ENCODE measurements at regions of chr16 and their contacts with region 1.

Region 1: GRCh38 chr16:20383106-20384029 is 21.2 kb downstream of the PDILT start:
- DNase-seq: peak; percentile 70 to 74
- ATAC-seq: peak; percentile 88 to 98
- H3K4me3 ChIP-seq: no peak overlapping the region
- H3K27ac ChIP-seq: no peak overlapping the region
- H3K4me1 ChIP-seq: no peaks in the 10 kb centered on the region
- CTCF ChIP-seq: peak; percentile 66
- EP300 ChIP-seq: no peak
- POLR2A ChIP-seq: no peak
- RAD21 ChIP-seq: peak; percentile 77 to 84

Region 2: GRCh38 chr16:19926449-19927390 is 456.6 kb before region 1 on chr16:
- CTCF ChIA-PET with region 1: interaction called, 10 read pairs
- POLR2A ChIA-PET with region 1: no interaction called
- DNase-seq: peak in 1 of 2 experiments; percentile 65
- ATAC-seq: peak in 1 of 2 experiments; percentile 42; a peak in 1 of 6 replicates
- H3K4me3 ChIP-seq: no peak overlapping the region
- H3K27ac ChIP-seq: peak overlapping the region; percentile 30 to 71; a peak in 5 of 6 replicates
- H3K4me1 ChIP-seq: peaks cover 9% of the 10 kb centered on the region
- CTCF ChIP-seq: no peak
- EP300 ChIP-seq: no peak
- POLR2A ChIP-seq: no peak
- RAD21 ChIP-seq: no peak

Region 3: DNA sequence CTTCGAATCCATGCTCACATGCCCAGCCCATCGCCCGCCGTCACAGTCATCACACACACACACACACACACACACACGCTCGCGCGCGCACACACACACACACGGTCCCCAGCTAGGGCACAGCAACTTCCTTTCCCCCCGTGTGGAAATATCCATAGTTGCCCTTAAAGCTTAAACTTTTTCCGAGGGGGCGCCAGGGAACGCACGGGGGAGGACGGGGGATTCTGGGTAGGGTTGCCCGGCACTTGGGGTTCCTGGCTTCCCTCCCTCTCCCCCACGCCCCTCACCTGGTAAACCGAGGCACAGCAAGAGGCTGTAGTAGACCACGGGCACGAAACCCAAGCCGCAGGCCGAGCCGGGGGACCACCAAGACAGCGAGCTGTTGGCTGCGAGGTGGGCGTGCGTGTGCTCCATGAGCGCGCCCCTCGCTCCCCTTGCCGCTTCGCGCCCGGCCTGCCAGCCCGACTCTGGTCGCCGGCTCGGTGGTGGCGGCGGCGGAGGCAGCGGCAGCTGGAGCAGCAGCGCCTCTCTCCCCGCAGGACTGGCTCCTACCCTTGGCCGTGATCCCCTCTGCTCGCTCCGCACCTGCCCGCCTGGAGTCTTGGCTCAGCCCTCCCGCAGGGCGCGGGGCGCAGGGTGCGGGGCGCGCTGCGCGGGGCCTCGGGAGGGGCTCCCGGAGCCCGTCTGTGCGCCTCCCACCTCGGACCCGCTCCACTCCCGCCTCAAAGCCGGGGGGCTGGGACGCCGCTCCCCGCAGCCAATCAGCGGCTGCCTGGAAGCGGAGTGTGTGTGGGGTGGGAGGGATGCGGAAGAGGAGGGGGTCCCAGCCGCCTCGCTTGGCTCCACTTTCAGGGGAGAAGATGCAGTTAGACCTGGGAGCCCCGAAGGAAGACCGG is 309.9 kb before region 1 on chr16 and contains the start of gene GPR139:
- CTCF ChIA-PET with region 1: no interaction called
- POLR2A ChIA-PET with region 1: no interaction called
- DNase-seq: no peak
- ATAC-seq: peak in 1 of 2 experiments; percentile 30; a peak in 1 of 6 replicates
- H3K4me3 ChIP-seq: no peak within 1 kb of the TSS
- H3K27ac ChIP-seq: no peak within 1 kb of the TSS
- H3K4me1 ChIP-seq: no peaks in the 10 kb centered on the region
- CTCF ChIP-seq: no peak
- EP300 ChIP-seq: no peak
- POLR2A ChIP-seq: no peak
- RAD21 ChIP-seq: no peak
- polyA plus RNA-seq, gene GPR139: not detected in 2 replicates

Region 4: DNA sequence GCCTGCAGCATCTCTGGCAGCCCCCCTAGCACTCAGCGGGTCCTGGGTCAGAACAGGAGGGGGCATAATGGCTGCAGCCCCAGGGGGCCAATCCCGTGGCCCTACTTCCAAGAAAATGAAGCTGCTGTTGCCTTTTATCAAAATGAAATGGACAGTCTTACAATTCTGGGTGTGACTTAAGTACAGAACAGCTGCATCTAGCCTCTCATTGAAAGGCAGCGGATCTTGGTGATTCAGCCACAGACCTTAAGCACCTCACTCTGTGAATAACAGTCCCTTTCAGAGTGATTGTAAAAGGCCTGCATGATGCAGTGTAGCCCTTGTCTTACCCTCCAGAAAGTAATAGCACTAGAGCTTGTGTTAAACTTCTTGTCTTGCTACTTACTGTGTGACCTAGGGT is 19.3 kb before region 1 on chr16:
- CTCF ChIA-PET with region 1: interaction called, 11 read pairs
- POLR2A ChIA-PET with region 1: no interaction called
- DNase-seq: no peak
- ATAC-seq: no peak
- H3K4me3 ChIP-seq: no peak overlapping the region
- H3K27ac ChIP-seq: no peak overlapping the region
- H3K4me1 ChIP-seq: no peaks in the 10 kb centered on the region
- CTCF ChIP-seq: no peak
- EP300 ChIP-seq: no peak
- POLR2A ChIP-seq: no peak
- RAD21 ChIP-seq: no peak

Region 5: DNA sequence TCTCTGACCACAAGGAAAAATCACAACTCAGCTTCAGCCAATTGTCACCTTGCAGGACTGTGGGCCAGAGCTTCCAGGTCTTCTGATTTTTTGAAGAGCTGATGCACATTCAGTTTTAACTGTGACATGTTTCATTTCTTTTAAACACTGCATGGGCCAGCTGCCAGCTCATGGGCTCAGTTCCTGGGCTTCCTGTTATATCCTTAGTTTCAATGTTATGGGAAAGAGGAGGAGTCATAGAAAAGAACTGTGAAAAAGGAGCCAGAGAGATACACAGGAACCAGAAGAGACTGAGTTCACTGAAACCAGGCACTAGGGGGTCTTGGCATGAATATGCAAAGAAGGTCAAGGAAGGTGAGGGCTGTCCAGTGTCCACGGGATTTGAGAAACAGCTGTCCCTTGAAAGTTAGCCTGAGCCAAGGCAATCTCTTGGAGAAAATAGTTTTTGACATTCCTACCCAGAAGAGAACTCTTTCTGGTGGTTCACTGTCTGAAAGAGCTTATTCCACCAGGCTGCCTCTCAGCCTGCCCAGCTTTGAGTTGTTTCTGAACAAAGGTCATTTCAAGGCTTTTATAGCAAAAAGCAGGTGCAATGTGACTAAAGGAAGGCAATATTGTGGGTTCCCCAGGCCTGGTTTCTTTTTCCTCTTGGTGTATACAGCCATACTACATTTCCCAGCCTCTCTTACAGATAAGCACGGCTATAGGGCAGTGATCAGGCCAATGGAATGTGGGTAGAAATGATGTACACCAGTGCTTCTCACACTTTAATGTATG is 10.6 kb after region 1 on chr16:
- CTCF ChIA-PET with region 1: interaction called, 31 read pairs
- POLR2A ChIA-PET with region 1: no interaction called
- DNase-seq: no peak
- ATAC-seq: no peak
- H3K4me3 ChIP-seq: no peak overlapping the region
- H3K27ac ChIP-seq: no peak overlapping the region
- H3K4me1 ChIP-seq: no peaks in the 10 kb centered on the region
- CTCF ChIP-seq: no peak
- EP300 ChIP-seq: no peak
- POLR2A ChIP-seq: no peak
- RAD21 ChIP-seq: no peak

Region 6: DNA sequence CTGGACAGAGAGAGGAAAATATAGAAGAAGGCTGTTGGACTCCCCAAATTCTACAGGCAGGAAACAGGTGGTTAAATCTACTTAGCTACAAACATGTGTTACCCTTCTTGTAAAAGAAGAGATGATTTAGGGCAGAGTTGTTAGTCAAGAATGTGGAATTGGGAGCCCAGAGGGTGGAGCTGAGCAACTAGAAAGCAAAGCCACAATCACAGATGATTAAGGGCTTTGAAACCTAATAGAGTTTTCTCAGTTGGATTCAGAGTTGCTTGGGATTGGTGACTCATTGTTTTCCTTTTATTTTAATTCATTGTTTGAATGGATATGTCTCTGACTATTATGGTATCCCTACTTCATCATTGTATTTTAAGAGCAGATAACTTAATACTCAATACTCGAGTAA is 32.2 kb after region 1 on chr16:
- CTCF ChIA-PET with region 1: no interaction called
- POLR2A ChIA-PET with region 1: no interaction called
- DNase-seq: no peak
- ATAC-seq: no peak
- H3K4me3 ChIP-seq: no peak overlapping the region
- H3K27ac ChIP-seq: no peak overlapping the region
- H3K4me1 ChIP-seq: no peaks in the 10 kb centered on the region
- CTCF ChIP-seq: no peak
- EP300 ChIP-seq: no peak
- POLR2A ChIP-seq: no peak
- RAD21 ChIP-seq: no peak

Region 7: GRCh38 chr16:20430948-20431347 is 47.6 kb after region 1 on chr16:
- CTCF ChIA-PET with region 1: no interaction called
- POLR2A ChIA-PET with region 1: no interaction called
- DNase-seq: no peak
- ATAC-seq: no peak; a peak in 1 of 6 replicates
- H3K4me3 ChIP-seq: no peak overlapping the region
- H3K27ac ChIP-seq: no peak overlapping the region
- H3K4me1 ChIP-seq: no peaks in the 10 kb centered on the region
- CTCF ChIP-seq: no peak
- EP300 ChIP-seq: no peak
- POLR2A ChIP-seq: no peak
- RAD21 ChIP-seq: no peak

Measured in A549 (cell line).